ENCODE measurements at regions of chr7 and their contacts with region 1.

Region 1: GRCh38 chr7:92447345-92448204 is at the start of gene GATAD1:
- DNase-seq: peak; percentile 95
- H3K4me3 Mint-ChIP-seq: peak within 1 kb of the TSS; percentile 94
- H3K27ac Mint-ChIP-seq: peak within 1 kb of the TSS; percentile 93
- H3K4me1 Mint-ChIP-seq: peaks cover 9% of the 10 kb centered on the region
- H3K27me3 Mint-ChIP-seq: peaks cover 2% of the 10 kb centered on the region
- total RNA-seq, gene GATAD1: 21.4 and 22.1 TPM in 2 replicates

Region 2: GRCh38 chr7:91826377-91826776 is 621.2 kb before region 1 on chr7:
- intact Hi-C with region 1: loop called (anchors 1 kb)
- DNase-seq: no peak
- H3K4me3 Mint-ChIP-seq: no peak overlapping the region
- H3K27ac Mint-ChIP-seq: no peak overlapping the region
- H3K4me1 Mint-ChIP-seq: peaks cover 2% of the 10 kb centered on the region
- H3K27me3 Mint-ChIP-seq: no peaks in the 10 kb centered on the region

Region 3: DNA sequence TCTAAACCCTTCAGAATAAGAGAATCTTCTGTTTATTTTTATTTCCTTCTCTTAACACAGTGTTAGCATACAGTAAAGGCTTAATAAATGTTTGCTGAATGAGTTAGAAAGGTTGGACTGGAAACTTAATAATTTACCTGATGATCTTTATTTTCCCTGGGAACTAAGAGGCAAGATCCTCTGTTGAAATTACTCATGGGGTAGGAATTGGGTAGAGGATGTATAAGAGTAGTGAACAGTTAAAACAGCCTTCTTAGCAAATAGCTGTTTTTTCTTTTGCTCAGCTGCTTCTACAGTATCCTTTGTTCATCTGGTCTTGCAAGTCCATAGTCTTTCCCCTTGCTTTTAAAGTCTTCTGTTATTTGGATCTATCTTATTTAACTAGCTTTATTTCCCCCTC is 426.9 kb before region 1 on chr7:
- intact Hi-C with region 1: no loop called
- DNase-seq: no peak
- H3K4me3 Mint-ChIP-seq: no peak overlapping the region
- H3K27ac Mint-ChIP-seq: no peak overlapping the region
- H3K4me1 Mint-ChIP-seq: no peaks in the 10 kb centered on the region
- H3K27me3 Mint-ChIP-seq: no peaks in the 10 kb centered on the region

Region 4: DNA sequence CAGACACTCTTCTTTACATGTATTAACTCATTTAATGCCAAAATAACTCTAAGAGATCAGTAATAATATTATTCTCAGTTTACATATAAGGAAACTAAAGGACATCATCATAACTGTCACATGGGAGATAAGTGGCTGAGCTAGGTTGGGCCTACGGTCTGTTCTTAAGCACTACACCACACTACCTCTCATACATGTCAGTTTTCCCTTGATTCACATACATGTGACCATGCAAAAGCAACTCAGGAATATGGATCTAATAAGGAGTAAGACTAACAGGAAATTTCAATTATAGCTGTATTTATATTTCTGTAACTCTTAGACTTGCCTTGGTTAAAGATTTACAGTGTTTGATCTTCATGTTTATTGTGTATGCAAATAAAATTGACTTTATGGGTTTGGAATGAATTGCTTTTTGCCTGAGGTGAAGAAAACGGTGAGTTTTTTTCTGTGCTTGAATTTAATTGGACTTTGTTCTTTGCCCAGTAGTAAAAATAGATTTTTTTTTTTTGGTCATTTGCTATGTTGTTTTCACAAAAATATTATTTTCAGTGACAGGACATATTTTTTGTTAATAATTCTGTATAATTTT is 383.0 kb before region 1 on chr7:
- intact Hi-C with region 1: loop called (anchors 5 kb)
- DNase-seq: no peak
- H3K4me3 Mint-ChIP-seq: no peak overlapping the region
- H3K27ac Mint-ChIP-seq: no peak overlapping the region
- H3K4me1 Mint-ChIP-seq: no peaks in the 10 kb centered on the region
- H3K27me3 Mint-ChIP-seq: no peaks in the 10 kb centered on the region

Region 5: DNA sequence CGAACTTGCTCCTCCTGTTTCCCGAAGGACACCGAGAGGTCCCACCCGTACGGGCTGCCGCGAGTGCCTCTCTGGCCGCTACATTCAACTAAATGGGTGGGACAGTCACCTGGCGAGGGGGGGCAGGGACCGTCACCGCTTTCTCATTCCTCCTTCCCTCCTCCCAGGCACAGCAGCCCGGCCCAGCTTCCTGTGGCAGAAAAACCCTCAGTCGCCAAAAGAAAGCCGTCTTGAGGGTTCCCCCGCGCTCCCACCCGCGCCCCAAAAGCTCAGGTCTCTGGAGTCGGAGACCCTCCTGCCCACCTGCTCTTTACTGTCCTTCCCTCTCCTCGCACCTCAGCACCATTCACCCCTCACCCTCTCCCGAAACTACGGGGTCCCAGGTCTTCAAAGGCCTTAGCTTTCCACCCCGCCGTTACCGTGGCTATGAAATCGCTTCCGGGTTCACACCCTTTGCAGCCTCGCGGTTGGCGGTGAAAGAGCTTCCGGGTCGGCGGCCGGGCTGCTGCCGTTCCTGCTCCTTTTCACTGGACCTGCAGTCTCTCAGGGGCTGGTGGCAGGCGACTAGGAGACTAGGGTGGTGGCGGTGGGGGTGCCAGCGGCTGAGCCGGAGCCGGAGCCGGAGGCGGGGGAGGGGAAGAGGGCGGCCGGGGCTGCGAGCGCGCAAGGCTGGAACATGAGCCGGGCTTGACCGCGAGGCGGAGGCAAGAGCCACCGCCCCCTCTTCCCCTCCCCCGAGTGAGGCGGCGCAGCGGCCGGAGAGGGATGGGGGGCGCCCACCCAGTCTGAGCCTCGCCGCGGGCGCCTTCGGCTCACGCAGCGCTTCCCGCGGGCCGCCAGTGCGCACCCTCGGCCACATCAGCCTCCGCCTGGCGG is 201.8 kb before region 1 on chr7 and contains the starts of genes ANKIB1 and KRIT1:
- intact Hi-C with region 1: loop called (anchors 1 kb)
- DNase-seq: peak; percentile 96
- H3K4me3 Mint-ChIP-seq: peak within 1 kb of the TSS; percentile 98
- H3K27ac Mint-ChIP-seq: peak within 1 kb of the TSS; percentile 99
- H3K4me1 Mint-ChIP-seq: peaks cover 32% of the 10 kb centered on the region
- H3K27me3 Mint-ChIP-seq: no peaks in the 10 kb centered on the region
- total RNA-seq, gene ANKIB1: 54.3 and 55.7 TPM in 2 replicates
- total RNA-seq, gene KRIT1: 47.3 and 49.2 TPM in 2 replicates

Region 6: GRCh38 chr7:92528188-92528957 is 80.8 kb after region 1 on chr7 and contains the starts of genes PEX1 and RBM48:
- intact Hi-C with region 1: loop called (anchors 1 kb)
- DNase-seq: peak; percentile 98
- H3K4me3 Mint-ChIP-seq: peak within 1 kb of the TSS; percentile 98
- H3K27ac Mint-ChIP-seq: peak within 1 kb of the TSS; percentile 98
- H3K4me1 Mint-ChIP-seq: peaks cover 22% of the 10 kb centered on the region
- H3K27me3 Mint-ChIP-seq: peaks cover 2% of the 10 kb centered on the region
- total RNA-seq, gene PEX1: 14.4 and 14.8 TPM in 2 replicates
- total RNA-seq, gene RBM48: 14.4 and 17.3 TPM in 2 replicates

Measured in activated CD4-positive, alpha-beta T cell treated with anti-CD3 and anti-CD28 coated beads, Interleukin-2, amount 10 ng/mL, durations not matched to agents 24 days and 14 days (primary cell).